Right cardiac atrium (tissue), 5 donors: ENCODE measurements at regions of chr1 and their contacts with region 1.

Region 1: GRCh38 chr1:182301467-182302198 is 90.0 kb downstream of the GLUL start:
- DNase-seq: peak; percentile 64 to 86 (median 80)
- ATAC-seq: peak; percentile 84 to 89
- H3K4me3 ChIP-seq: no peak overlapping the region
- H3K27ac ChIP-seq: no peak overlapping the region
- H3K4me1 ChIP-seq: peaks cover 5% of the 10 kb centered on the region
- H3K27me3 ChIP-seq: no peaks in the 10 kb centered on the region

Region 2: GRCh38 chr1:182229921-182230491 is 71.6 kb before region 1 on chr1:
- intact Hi-C with region 1: no loop called
- DNase-seq: no peak
- ATAC-seq: peak; percentile 59 to 70
- H3K4me3 ChIP-seq: no peak overlapping the region
- H3K27ac ChIP-seq: no peak overlapping the region
- H3K4me1 ChIP-seq: peaks cover 2% of the 10 kb centered on the region
- H3K27me3 ChIP-seq: no peaks in the 10 kb centered on the region

Region 3: DNA sequence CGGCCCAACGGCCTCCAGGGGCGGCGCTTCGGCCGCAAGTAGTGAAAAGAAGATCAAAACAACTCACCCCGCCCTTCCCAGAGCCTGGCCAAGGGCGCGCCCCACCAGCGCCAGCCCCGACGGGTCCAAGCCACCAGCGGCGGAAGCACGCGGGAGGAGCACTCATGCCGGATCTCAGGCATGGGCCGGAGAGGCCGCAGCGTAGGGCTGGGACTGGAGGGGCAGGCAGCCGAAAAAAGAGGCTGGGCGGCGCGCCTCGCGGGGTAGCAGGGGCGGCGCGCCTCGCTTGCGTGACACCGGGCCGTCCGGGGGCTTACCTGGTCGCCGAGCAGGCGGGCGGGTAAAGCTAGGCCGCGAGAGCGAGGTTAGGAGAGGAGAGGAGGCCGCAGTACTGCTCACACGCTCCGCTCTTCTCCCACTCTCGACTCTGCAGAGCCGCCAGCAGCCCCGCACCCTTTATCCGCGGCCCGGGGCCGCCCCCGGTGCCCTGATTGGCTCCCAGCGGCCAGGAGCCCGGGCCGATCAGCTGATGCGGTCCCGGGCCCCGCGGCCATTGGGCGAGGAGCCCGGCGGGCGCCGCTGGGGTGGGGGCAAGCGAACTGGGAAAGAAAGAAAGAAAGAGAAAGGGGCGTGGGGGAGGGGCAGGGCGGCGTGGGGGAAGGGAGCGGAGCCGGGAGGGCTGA is 89.9 kb after region 1 on chr1 and contains the start of gene GLUL:
- intact Hi-C with region 1: loop called in 2 of 4 experiments (anchors 5 to 10 kb)
- DNase-seq: peak; percentile 93 to 98 (median 98)
- ATAC-seq: peak; percentile 95 to 96
- H3K4me3 ChIP-seq: peak within 1 kb of the TSS; percentile 91
- H3K27ac ChIP-seq: peak within 1 kb of the TSS; percentile 97
- H3K4me1 ChIP-seq: peaks cover 2% of the 10 kb centered on the region
- H3K27me3 ChIP-seq: no peaks in the 10 kb centered on the region
- total RNA-seq, gene GLUL: 303 to 361 (median 342) TPM